ENCODE measurements at regions of chr7 and their contacts with region 1.

Region 1: GRCh38 chr7:131507592-131508331 is 48.7 kb downstream of the PODXL start:
- DNase-seq: peak; percentile 61 to 83 (median 69)
- H3K4me3 ChIP-seq: no peak overlapping the region
- H3K4me3 Mint-ChIP-seq: peak overlapping the region in 3 of 7 donors; percentile 1 to 61 (median 38)
- H3K27ac ChIP-seq: no peak overlapping the region
- H3K27ac Mint-ChIP-seq: no peak overlapping the region
- H3K4me1 ChIP-seq: peaks cover 9% of the 10 kb centered on the region
- H3K4me1 Mint-ChIP-seq: peaks cover 15 to 21% (median 16%) of the 10 kb centered on the region in 3 donors
- H3K27me3 ChIP-seq: peaks cover 18% of the 10 kb centered on the region
- H3K27me3 Mint-ChIP-seq: peaks cover 6 to 17% of the 10 kb centered on the region in 2 donors

Region 2: DNA sequence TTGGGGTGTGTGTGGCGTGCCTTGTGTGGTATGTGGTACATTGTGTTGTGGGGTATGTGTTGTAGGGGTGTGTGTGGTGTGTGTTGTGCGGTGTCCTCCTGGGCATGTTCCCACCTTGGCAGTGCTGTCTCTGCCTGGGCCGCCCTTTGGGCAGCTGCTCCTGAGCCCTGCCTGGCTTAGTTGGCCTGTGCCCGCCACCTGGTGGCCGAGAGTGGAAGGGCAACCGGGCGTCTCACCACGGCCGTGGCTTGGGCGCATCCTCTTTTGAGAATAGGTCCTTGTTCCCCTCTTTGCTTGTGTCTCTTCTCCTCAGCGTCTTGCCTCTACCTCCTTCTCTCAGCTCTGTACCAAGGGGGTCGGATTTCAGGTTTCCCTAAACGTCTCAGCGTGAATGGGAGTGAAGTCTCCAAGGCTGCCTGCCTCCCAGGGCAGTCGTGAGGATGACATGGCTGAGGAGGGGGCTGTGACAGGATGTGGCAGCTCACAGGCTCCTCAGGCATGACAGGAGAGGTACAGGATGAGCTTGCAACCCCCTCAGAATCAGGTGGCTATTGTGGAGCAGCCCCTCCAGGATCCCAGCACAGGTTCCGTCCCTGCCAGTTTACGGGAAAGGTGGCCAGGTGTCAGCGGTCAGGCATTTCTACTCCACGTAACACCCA is 147.0 kb after region 1 on chr7:
- CTCF ChIA-PET with region 1: interaction called, 38 read pairs
- POLR2A ChIA-PET with region 1: no interaction called
- DNase-seq: peak; percentile 55 to 82 (median 68)
- H3K4me3 ChIP-seq: no peak overlapping the region
- H3K4me3 Mint-ChIP-seq: no peak overlapping the region
- H3K27ac ChIP-seq: no peak overlapping the region
- H3K27ac Mint-ChIP-seq: peak overlapping the region in 1 of 8 donors; percentile 16
- H3K4me1 ChIP-seq: no peaks in the 10 kb centered on the region
- H3K4me1 Mint-ChIP-seq: no peaks in the 10 kb centered on the region
- H3K27me3 ChIP-seq: no peaks in the 10 kb centered on the region
- H3K27me3 Mint-ChIP-seq: peaks cover 3 to 11% of the 10 kb centered on the region in 2 donors